Caco-2 (cell line): ENCODE measurements at regions of chr6 and their contacts with region 1.

Region 1: GRCh38 chr6:82616386-82617028 is 252.9 kb downstream of the TPBG start:
- DNase-seq: no peak
- H3K4me3 ChIP-seq: no peak overlapping the region
- H3K4me3 Mint-ChIP-seq: no peak overlapping the region
- H3K27ac Mint-ChIP-seq: no peak overlapping the region
- H3K4me1 ChIP-seq: no peaks in the 10 kb centered on the region
- H3K4me1 Mint-ChIP-seq: no peaks in the 10 kb centered on the region
- H3K27me3 ChIP-seq: no peaks in the 10 kb centered on the region
- H3K27me3 Mint-ChIP-seq: no peaks in the 10 kb centered on the region
- CTCF ChIP-seq: no peak

Region 2: GRCh38 chr6:82270881-82271645 is 345.4 kb before region 1 on chr6:
- CTCF ChIA-PET with region 1: interaction called, 4 read pairs
- POLR2A ChIA-PET with region 1: no interaction called
- intact Hi-C with region 1: loop called (anchors 1 kb)
- DNase-seq: no peak
- H3K4me3 ChIP-seq: no peak overlapping the region
- H3K4me3 Mint-ChIP-seq: no peak overlapping the region
- H3K27ac Mint-ChIP-seq: no peak overlapping the region
- H3K4me1 ChIP-seq: no peaks in the 10 kb centered on the region
- H3K4me1 Mint-ChIP-seq: peaks cover 6% of the 10 kb centered on the region
- H3K27me3 ChIP-seq: no peaks in the 10 kb centered on the region
- H3K27me3 Mint-ChIP-seq: no peaks in the 10 kb centered on the region
- CTCF ChIP-seq: peak; percentile 58 to 71

Region 3: DNA sequence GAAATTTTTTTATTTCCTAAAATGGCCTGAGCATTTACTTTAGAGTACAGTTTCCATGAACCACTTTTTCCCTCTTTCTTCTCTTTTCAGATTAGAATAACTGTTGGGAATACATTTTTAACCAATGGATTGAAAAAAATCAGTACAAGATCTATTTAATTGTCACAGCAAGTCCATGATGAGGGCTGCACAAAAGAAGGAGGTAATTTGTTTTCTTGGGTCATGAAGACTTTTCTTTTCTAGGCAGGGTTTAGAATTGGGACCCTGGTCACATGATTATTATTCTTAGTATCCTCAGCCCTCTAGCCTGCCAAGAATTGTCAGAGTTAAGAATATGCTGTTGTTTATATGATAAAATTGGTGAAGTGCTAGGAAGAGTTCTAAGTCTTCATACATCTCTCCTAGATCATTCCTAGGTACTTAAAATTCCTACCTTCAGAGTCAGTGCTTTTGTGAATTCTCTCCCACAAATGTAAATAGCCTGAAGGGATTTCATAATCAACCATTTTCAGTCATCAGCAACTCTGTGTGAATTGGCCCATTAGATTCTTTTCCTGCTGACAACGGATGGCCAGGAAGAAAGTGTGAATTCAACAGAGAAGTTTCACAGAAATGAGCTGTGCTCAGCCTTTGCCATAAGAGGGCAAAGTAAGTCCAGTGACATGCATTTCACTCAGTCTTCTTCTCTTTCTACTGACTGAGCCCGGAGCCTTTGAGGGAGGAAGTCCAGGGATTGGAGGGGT is 285.3 kb before region 1 on chr6:
- CTCF ChIA-PET with region 1: interaction called, 3 read pairs
- POLR2A ChIA-PET with region 1: no interaction called
- intact Hi-C with region 1: loop called (anchors 1 kb)
- DNase-seq: peak in 1 of 2 experiments; percentile 22
- H3K4me3 ChIP-seq: no peak overlapping the region
- H3K4me3 Mint-ChIP-seq: no peak overlapping the region
- H3K27ac Mint-ChIP-seq: no peak overlapping the region
- H3K4me1 ChIP-seq: 0 out of 2 replicates have a peak, but pooled peaks cover 7% of the 10 kb centered on the region
- H3K4me1 Mint-ChIP-seq: no peaks in the 10 kb centered on the region
- H3K27me3 ChIP-seq: no peaks in the 10 kb centered on the region
- H3K27me3 Mint-ChIP-seq: peaks cover 3% of the 10 kb centered on the region
- CTCF ChIP-seq: peak in 1 of 2 experiments; percentile 4

Region 4: GRCh38 chr6:83411731-83412130 is 795.2 kb after region 1 on chr6:
- CTCF ChIA-PET with region 1: no interaction called
- POLR2A ChIA-PET with region 1: no interaction called
- intact Hi-C with region 1: no loop called
- DNase-seq: no peak
- H3K4me3 ChIP-seq: no peak overlapping the region
- H3K4me3 Mint-ChIP-seq: no peak overlapping the region
- H3K27ac Mint-ChIP-seq: peak overlapping the region; percentile 51
- H3K4me1 ChIP-seq: no peaks in the 10 kb centered on the region
- H3K4me1 Mint-ChIP-seq: no peaks in the 10 kb centered on the region
- H3K27me3 ChIP-seq: no peaks in the 10 kb centered on the region
- H3K27me3 Mint-ChIP-seq: no peaks in the 10 kb centered on the region
- CTCF ChIP-seq: no peak